Activated T-helper 1 cell treated with anti-CD3 and anti-CD28 coated beads, Interleukin-12 subunit alpha, Interleukin-12 subunit beta, Interleukin-2, Interleukin-4 antibody, amounts not matched to agents 30 ng/mL and 10 ng/mL and 1 ng/mL, durations not matched to agents 14 hours and 24 hours and 36 hours (primary cell): ENCODE measurements at regions of chr1 and their contacts with region 1.

Region 1: DNA sequence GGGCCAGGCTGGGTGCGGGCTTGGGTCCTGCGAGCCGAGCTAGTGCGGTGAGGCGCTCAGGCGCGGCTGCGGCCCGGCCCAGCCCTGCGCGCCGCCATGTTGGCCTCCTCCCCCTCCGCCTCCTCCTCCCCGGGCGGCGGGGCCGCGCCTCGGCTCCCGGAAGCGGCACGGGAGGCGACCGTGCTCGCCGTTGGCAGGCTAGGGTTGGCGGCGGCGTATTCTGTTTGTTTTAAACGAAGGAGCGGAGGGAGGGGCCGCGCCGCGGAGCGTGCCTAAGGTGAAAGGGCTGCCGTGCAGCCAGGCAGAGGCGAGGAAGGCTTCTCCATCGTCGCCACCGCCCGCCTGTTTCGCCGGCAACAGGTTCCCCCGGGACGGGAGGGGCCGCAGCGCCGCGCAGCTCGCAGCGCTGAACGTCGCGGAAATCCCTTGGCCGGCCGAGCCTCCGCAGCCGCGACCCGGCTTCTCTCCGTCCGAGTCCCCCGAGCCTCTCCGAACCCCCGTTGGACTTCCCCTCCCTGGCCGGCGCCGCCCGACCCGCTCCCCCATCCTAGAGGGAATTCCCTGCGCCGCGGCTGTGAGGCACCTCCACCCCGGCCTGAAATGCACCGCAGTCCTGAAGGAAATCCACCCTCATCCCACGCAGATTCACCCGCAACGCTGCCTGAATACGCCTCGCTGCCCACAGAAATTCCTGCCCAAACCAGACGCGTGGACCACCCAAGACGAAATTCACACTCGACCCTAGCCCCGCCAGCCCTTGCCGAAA is at the start of gene USP24:
- DNase-seq: peak; percentile 82
- H3K4me3 Mint-ChIP-seq: peak within 1 kb of the TSS; percentile 93
- H3K27ac Mint-ChIP-seq: peak within 1 kb of the TSS; percentile 96
- H3K4me1 Mint-ChIP-seq: peaks cover 61% of the 10 kb centered on the region
- H3K27me3 Mint-ChIP-seq: peaks cover 3% of the 10 kb centered on the region
- total RNA-seq, gene USP24: 53.6 and 58.6 TPM in 2 replicates

Region 2: DNA sequence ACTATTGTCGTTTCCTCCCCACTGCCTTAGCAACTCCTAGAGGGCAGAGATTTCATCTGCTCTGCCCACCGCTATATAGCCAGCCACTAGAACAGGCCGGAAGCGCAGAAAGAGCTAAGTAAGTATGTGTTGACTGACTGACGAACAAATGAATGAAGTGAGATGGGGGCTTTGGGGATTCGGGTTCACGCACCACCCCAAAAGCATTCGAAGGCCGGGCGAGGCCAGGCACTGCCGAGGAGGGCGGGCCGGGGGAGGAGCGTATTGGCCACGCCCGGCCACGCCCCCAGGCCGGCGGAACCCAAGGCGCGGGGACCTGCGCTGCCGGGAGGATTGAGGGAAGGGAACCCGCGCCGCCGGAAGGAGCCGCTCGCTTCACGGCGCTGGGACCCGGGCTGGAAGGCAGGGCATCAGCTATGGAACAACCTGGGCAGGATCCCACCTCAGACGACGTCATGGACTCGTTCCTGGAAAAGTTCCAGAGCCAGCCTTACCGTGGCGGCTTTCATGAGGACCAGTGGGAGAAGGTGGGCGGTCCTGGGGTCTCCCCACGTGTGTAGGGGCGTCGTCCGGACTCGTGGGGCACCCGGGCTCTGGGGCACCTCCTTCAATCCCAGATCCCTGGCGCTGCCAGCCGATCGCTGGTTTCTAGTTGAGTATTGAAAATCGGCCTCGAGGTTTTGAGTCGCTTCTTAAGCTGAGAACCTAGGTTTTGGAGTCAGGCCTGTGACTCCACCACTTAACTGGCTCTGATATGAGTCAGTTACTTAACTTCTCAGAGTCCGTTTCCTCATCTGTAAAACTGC is 499.7 kb before region 1 on chr1 and contains the start of gene TTC4:
- intact Hi-C with region 1: loop called (anchors 2 kb)
- DNase-seq: peak; percentile 84
- H3K4me3 Mint-ChIP-seq: peak within 1 kb of the TSS; percentile 94
- H3K27ac Mint-ChIP-seq: peak within 1 kb of the TSS; percentile 77
- H3K4me1 Mint-ChIP-seq: peaks cover 31% of the 10 kb centered on the region
- H3K27me3 Mint-ChIP-seq: peaks cover 6% of the 10 kb centered on the region
- total RNA-seq, gene TTC4: 43.7 TPM in 2 replicates

Region 3: GRCh38 chr1:55127827-55128343 is 87.6 kb before region 1 on chr1:
- intact Hi-C with region 1: loop called (anchors 1 kb)
- DNase-seq: no peak
- H3K4me3 Mint-ChIP-seq: peak overlapping the region; percentile 8
- H3K27ac Mint-ChIP-seq: peak overlapping the region; percentile 69
- H3K4me1 Mint-ChIP-seq: peaks cover 31% of the 10 kb centered on the region
- H3K27me3 Mint-ChIP-seq: no peaks in the 10 kb centered on the region

Region 4: DNA sequence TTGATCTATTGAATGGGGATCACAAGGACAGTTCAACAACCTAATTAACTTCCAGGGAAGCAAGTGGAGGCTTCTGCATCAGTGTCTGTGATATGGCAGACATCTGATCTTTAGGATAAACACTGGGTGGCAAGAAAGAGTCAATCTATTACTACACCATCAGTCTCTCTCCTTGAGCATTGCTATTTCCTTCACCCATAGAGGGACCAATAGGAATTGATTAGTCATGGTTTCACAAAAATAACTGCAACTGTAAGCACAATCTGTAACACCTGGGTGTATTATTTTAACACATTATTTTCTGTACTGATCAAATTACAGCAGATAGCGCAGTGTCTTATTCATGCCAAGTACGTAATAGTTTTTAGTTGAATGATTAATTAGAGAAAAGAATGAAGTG is 50.5 kb before region 1 on chr1:
- intact Hi-C with region 1: loop called (anchors 2 kb)
- DNase-seq: no peak
- H3K4me3 Mint-ChIP-seq: no peak overlapping the region
- H3K27ac Mint-ChIP-seq: peak overlapping the region; percentile 49
- H3K4me1 Mint-ChIP-seq: peaks cover 44% of the 10 kb centered on the region
- H3K27me3 Mint-ChIP-seq: no peaks in the 10 kb centered on the region

Region 5: GRCh38 chr1:55195521-55196233 is 19.8 kb before region 1 on chr1:
- intact Hi-C with region 1: loop called (anchors 2 kb)
- DNase-seq: no peak
- H3K4me3 Mint-ChIP-seq: no peak overlapping the region
- H3K27ac Mint-ChIP-seq: no peak overlapping the region
- H3K4me1 Mint-ChIP-seq: peaks cover 44% of the 10 kb centered on the region
- H3K27me3 Mint-ChIP-seq: no peaks in the 10 kb centered on the region

Region 6: DNA sequence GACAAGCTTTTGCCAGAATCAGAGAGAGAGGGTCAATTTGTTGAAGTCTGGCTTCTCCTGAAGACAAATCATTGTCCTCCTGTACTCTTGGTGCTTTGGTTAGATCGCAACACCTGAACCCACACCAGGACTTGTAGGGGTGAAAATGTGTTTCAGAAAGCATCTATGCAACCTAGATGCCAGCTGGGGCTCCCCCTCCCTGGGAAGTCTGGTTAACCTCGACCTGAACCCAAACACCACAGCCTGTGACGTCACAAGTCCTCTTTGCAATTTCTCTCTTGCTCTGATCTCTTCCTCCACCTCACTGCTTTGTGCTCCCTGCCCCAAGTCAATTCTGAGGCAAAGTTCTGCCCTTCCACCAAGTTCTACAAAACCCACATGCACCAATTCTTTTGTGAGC is 42.5 kb after region 1 on chr1:
- intact Hi-C with region 1: loop called (anchors 5 kb)
- DNase-seq: peak; percentile 61
- H3K4me3 Mint-ChIP-seq: no peak overlapping the region
- H3K27ac Mint-ChIP-seq: peak overlapping the region; percentile 78
- H3K4me1 Mint-ChIP-seq: peaks cover 15% of the 10 kb centered on the region
- H3K27me3 Mint-ChIP-seq: peaks cover 26% of the 10 kb centered on the region